GM12878 (cell line): ENCODE measurements at regions of chr9 and their contacts with region 1.

Region 1: GRCh38 chr9:99231711-99232110 is 9.6 kb downstream of the SEC61B start:
- DNase-seq: peak; percentile 25
- ATAC-seq: peak; percentile 53
- H3K4me3 ChIP-seq: no peak overlapping the region
- H3K27ac ChIP-seq: no peak overlapping the region
- H3K4me1 ChIP-seq: peaks cover 26% of the 10 kb centered on the region
- H3K27me3 ChIP-seq: no peaks in the 10 kb centered on the region
- CTCF ChIP-seq: peak; percentile 85 to 90 (median 88)
- EP300 ChIP-seq: no peak
- POLR2A ChIP-seq: no peak
- RAD21 ChIP-seq: peak; percentile 81

Region 2: GRCh38 chr9:99173570-99174504 is 57.9 kb before region 1 on chr9:
- CTCF ChIA-PET with region 1: interaction called, 10 read pairs
- POLR2A ChIA-PET with region 1: no interaction called
- RAD21 ChIA-PET with region 1: interaction called, 5 read pairs
- SMC1A ChIA-PET with region 1: interaction called, 9 read pairs
- in situ Hi-C with region 1: no loop called
- intact Hi-C with region 1: no loop called
- DNase-seq: no peak
- ATAC-seq: peak; percentile 81
- H3K4me3 ChIP-seq: no peak overlapping the region
- H3K27ac ChIP-seq: no peak overlapping the region
- H3K4me1 ChIP-seq: peaks cover 8% of the 10 kb centered on the region
- H3K27me3 ChIP-seq: no peaks in the 10 kb centered on the region
- CTCF ChIP-seq: no peak
- EP300 ChIP-seq: no peak
- POLR2A ChIP-seq: no peak
- RAD21 ChIP-seq: no peak

Region 3: DNA sequence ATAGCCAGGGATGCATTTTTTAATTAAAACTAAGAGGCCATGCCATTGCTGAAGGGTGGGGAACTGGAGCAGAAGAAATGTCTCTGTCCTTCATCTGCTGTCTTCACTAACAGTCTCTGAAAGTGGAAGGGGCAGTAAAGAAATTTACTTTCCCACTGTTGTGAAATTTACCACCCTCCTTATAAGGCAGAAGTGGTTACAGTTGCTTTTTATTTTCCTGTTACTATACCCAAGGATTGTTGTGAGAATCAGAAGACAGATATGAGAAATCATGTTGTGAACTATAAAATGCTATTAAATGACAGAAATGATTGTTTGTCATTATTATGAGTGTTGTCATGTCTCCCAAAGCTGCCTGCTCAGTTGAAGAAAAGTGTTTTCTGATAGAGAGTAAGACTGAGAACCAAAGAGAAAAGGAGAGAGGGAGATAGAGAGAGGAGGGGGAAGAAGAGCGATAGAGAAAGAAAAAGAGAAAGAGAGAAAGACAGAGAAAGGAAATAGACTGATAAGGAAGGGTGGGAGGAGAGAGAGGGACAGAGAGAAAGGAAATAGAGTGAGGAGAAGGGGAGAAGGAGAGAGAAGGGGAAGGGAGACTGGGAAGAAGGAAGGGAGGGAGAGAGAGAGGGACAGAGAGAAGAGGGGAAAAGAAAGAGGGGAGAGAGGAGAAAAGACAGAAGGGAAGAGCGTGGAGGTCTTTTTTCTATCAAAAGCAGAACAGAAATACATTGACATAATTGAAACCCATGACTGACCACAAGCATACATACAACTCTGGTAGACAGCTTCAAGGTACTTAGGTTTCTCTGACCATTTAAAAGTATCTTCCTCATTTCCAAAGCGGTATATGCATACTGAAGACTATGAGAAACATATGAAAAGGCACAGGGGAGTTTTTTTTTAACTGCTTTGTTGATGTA is 12.9 kb after region 1 on chr9:
- CTCF ChIA-PET with region 1: interaction called, 70 read pairs
- POLR2A ChIA-PET with region 1: interaction called, 8 read pairs
- RAD21 ChIA-PET with region 1: interaction called, 87 read pairs
- SMC1A ChIA-PET with region 1: interaction called, 143 read pairs
- in situ Hi-C with region 1: no loop called
- intact Hi-C with region 1: loop called (anchors 1 kb)
- DNase-seq: peak; percentile 68
- ATAC-seq: peak; percentile 96
- H3K4me3 ChIP-seq: no peak overlapping the region
- H3K27ac ChIP-seq: peak overlapping the region; percentile 94
- H3K4me1 ChIP-seq: peaks cover 31% of the 10 kb centered on the region
- H3K27me3 ChIP-seq: no peaks in the 10 kb centered on the region
- CTCF ChIP-seq: no peak
- EP300 ChIP-seq: peak; percentile 84 to 96
- POLR2A ChIP-seq: no peak
- RAD21 ChIP-seq: no peak

Region 4: DNA sequence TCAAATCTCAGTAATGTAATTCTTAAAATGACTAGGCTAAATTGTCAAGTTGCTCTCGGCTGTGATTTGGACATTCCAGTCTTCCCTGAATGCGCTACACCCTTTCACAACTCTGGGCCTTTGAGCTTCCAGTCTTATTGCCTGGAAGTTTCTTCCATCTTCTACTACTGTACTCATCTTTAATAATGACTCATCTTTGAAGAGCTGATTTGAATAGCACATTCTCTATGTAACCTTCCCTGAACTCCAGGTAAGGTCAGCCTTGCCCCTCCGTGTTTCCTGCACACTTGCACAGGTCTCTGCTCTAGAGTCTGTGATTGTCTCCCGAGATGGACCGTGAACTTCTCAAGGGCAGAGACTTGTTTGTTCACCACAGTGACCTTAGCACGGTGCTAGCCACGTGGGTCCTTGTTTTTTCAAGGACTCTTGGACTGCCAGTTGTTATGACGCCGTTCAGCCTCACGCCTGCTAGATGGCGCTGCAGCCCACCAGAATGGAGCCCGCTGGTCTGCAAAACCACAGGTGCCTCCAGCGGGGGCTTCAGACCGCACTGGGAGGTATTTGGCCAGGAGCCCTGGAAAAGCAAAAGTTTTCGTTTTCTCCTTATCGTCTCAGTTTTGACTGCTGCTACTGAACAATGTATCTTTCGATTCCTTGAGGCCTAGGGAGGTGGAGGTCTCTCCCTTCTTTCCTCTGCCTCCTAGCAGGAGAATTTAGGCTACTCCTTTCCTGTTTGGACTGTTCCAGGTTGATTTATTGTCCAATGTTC is 34.7 kb after region 1 on chr9:
- CTCF ChIA-PET with region 1: interaction called, 160 read pairs
- POLR2A ChIA-PET with region 1: interaction called, 13 read pairs
- RAD21 ChIA-PET with region 1: interaction called, 98 read pairs
- SMC1A ChIA-PET with region 1: interaction called, 96 read pairs
- in situ Hi-C with region 1: no loop called
- intact Hi-C with region 1: no loop called
- DNase-seq: peak; percentile 48
- ATAC-seq: peak; percentile 82
- H3K4me3 ChIP-seq: no peak overlapping the region
- H3K27ac ChIP-seq: peak overlapping the region; percentile 57; the same call in 1 of the 2 replicates
- H3K4me1 ChIP-seq: peaks cover 40% of the 10 kb centered on the region
- H3K27me3 ChIP-seq: no peaks in the 10 kb centered on the region
- CTCF ChIP-seq: peak; percentile 90 to 97 (median 93); a peak in 5 of 6 replicates
- EP300 ChIP-seq: no peak
- POLR2A ChIP-seq: no peak
- RAD21 ChIP-seq: peak; percentile 92

Region 5: DNA sequence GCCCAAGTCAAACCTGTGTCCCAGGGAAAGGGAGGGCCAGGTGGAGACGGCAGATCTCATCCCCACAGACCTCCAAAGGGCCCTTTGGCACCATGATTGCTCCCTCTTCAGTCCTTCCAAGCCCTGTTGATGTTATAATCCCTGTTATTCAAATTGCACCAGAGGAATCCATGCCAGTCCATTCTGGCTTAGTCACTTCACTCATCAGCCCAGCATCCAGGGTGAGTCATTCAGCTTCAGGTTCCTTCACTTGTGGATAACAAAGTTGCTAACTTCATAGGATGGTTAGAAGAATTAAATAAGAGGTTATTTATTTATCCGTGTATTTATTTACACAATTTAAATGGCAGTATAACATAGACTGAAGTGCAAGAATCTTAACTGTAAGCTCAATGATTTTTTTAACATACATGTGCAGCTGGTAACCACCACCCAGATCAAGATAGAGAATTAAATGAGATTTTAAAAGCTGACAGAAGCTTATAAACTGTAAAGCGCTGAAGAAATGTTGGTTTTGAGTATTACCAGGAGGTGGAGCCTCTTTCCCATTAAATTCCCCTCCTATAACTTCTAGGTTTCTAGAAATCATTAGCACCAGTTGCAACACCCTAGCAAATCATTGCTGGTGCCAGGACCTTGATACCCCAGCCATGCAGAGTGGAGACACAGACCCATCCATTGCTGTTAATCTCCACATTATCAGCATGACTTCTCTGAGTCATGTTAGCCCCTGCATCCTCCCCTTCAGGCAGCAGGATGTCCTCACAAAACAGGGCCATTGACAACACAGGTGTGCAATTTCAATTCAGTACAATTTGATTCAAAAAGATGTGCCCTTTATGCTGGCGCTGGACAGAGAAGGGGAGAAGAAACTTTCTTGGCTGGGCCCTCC is 67.7 kb after region 1 on chr9:
- CTCF ChIA-PET with region 1: interaction called, 19 read pairs
- POLR2A ChIA-PET with region 1: interaction called, 6 read pairs
- RAD21 ChIA-PET with region 1: interaction called, 10 read pairs
- SMC1A ChIA-PET with region 1: interaction called, 9 read pairs
- in situ Hi-C with region 1: no loop called
- intact Hi-C with region 1: no loop called
- DNase-seq: no peak
- ATAC-seq: peak; percentile 55
- H3K4me3 ChIP-seq: no peak overlapping the region
- H3K27ac ChIP-seq: no peak overlapping the region
- H3K4me1 ChIP-seq: no peaks in the 10 kb centered on the region
- H3K27me3 ChIP-seq: no peaks in the 10 kb centered on the region
- CTCF ChIP-seq: peak in 2 of 3 experiments; percentile 15 to 39; a peak in 2 of 6 replicates
- EP300 ChIP-seq: no peak
- POLR2A ChIP-seq: no peak
- RAD21 ChIP-seq: peak; percentile 61

Region 6: DNA sequence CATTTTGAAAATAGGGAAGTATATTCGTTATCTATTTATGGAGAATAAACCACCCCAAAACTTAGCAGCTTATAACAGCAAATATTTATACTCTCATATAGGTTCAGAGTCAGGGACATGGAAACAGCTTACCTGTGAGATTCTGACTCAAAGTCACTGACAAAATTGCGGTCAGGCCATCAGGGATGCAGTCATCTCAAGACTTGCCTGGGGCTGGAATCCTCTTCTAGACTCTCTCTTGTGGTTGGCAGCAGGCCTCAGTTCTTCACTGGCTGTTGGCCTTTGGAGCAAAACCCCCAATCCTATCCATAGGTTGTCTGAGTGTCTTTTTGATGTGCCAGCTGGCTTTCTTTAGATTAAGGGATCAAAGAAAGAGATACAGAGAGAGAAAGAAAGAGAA is 265.9 kb after region 1 on chr9:
- CTCF ChIA-PET with region 1: no interaction called
- POLR2A ChIA-PET with region 1: no interaction called
- RAD21 ChIA-PET with region 1: no interaction called
- SMC1A ChIA-PET with region 1: no interaction called
- in situ Hi-C with region 1: no loop called
- intact Hi-C with region 1: no loop called
- DNase-seq: no peak
- ATAC-seq: peak; percentile 52
- H3K4me3 ChIP-seq: no peak overlapping the region
- H3K27ac ChIP-seq: no peak overlapping the region
- H3K4me1 ChIP-seq: no peaks in the 10 kb centered on the region
- H3K27me3 ChIP-seq: no peaks in the 10 kb centered on the region
- CTCF ChIP-seq: no peak
- EP300 ChIP-seq: no peak
- POLR2A ChIP-seq: no peak
- RAD21 ChIP-seq: no peak

Region 7: DNA sequence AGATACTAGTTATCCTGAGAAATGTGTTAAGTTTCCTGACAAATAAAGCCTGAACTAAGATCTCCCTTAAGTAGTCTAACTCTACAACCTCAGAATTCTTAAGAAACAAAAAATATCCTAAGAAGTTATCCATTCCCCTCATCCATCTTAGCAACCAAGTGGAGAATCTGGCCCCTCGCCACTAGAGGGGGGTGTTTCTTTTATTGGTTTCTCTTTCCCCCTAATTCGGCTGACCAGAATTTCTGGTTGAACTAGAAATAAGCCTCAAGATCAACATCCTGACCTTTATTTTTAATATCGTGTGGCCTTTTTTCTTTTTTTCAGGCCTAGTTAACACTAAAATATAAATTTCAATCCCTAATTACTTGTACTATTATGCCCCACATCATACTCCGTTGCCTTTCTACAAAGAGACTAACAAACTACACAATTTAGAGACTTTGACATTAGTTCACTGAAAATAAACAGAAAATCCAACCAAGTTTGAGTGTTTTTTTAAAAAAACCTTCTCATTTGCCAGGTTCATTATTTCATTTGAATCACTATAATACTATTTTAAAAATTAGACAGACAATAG is 575.7 kb after region 1 on chr9:
- CTCF ChIA-PET with region 1: interaction called, 18 read pairs
- POLR2A ChIA-PET with region 1: no interaction called
- RAD21 ChIA-PET with region 1: interaction called, 4 read pairs
- SMC1A ChIA-PET with region 1: interaction called, 7 read pairs
- in situ Hi-C with region 1: no loop called
- intact Hi-C with region 1: no loop called
- DNase-seq: no peak
- ATAC-seq: peak; percentile 87
- H3K4me3 ChIP-seq: no peak overlapping the region
- H3K27ac ChIP-seq: no peak overlapping the region
- H3K4me1 ChIP-seq: peaks cover 6% of the 10 kb centered on the region
- H3K27me3 ChIP-seq: no peaks in the 10 kb centered on the region
- CTCF ChIP-seq: peak; percentile 73 to 81 (median 75)
- EP300 ChIP-seq: no peak
- POLR2A ChIP-seq: no peak
- RAD21 ChIP-seq: peak; percentile 89